BJ (cell line): ENCODE measurements at regions of chr5 and their contacts with region 1.

Region 1: DNA sequence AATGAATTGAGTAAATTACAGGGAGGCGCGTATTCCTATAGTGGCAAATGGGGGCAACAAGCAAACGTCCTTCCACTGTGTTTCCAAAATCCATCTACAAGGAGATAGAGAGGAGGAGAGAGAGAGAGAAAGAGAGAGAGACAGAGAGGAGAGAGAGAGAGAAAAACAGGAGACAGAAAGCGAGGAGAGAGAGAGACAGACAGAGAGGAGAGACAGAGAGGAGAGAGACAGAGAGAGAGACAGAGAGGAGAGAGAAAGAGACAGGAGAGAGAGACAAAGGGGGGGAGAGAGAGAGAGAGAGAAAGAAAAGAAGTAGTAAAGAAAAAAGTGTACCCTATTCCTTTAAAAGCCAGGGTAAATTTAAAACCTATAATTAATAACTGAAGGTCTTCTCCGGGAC is 39.9 kb downstream of the DEPDC1B start:
- DNase-seq: no peak
- H3K4me3 ChIP-seq: no peak overlapping the region
- H3K27me3 ChIP-seq: no peaks in the 10 kb centered on the region
- CTCF ChIP-seq: no peak

Region 2: DNA sequence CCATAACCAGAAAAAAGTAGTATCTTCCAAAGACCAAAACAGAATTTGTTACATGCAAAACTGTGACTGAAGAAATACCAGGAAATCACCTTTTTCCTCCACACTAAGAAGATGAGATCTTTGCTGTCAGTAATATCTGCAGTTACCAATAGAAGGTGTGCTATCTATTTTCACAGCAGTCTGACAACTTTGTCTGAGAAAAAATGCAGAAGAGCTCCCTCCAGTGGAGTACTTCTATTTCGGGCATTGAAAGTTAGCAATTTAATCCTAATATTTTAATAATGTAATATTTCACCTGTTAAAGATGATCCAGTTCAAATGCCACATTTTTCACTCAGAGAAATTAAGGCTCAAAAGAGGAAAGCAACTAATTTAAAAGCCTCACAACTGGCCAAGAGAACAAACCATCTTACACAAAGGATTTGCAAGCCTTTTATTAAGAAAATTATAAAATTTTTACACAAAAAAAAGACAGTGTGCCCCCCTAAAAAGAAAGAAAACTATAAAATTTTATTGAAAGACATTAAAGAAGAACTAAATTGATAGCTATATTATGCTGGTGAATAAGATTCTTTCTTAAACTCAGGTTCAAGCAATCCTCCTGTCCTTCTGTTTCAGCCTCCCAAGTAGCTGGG is 10.6 kb before region 1 on chr5:
- CTCF ChIA-PET with region 1: interaction called, 14 read pairs
- POLR2A ChIA-PET with region 1: no interaction called
- DNase-seq: no peak
- H3K4me3 ChIP-seq: no peak overlapping the region
- H3K27me3 ChIP-seq: no peaks in the 10 kb centered on the region
- CTCF ChIP-seq: peak; percentile 74